ENCODE measurements at regions of chr5 and their contacts with region 1.

Region 1: GRCh38 chr5:157312492-157312891 is 46.6 kb downstream of the CYFIP2 start:
- DNase-seq: peak; percentile 62
- ATAC-seq: peak; percentile 91
- H3K4me3 ChIP-seq: no peak overlapping the region
- H3K27ac ChIP-seq: no peak overlapping the region
- H3K4me1 ChIP-seq: no peaks in the 10 kb centered on the region
- H3K27me3 ChIP-seq: no peaks in the 10 kb centered on the region
- CTCF ChIP-seq: peak; percentile 85
- EP300 ChIP-seq: no peak
- POLR2A ChIP-seq: no peak
- RAD21 ChIP-seq: peak; percentile 71

Region 2: DNA sequence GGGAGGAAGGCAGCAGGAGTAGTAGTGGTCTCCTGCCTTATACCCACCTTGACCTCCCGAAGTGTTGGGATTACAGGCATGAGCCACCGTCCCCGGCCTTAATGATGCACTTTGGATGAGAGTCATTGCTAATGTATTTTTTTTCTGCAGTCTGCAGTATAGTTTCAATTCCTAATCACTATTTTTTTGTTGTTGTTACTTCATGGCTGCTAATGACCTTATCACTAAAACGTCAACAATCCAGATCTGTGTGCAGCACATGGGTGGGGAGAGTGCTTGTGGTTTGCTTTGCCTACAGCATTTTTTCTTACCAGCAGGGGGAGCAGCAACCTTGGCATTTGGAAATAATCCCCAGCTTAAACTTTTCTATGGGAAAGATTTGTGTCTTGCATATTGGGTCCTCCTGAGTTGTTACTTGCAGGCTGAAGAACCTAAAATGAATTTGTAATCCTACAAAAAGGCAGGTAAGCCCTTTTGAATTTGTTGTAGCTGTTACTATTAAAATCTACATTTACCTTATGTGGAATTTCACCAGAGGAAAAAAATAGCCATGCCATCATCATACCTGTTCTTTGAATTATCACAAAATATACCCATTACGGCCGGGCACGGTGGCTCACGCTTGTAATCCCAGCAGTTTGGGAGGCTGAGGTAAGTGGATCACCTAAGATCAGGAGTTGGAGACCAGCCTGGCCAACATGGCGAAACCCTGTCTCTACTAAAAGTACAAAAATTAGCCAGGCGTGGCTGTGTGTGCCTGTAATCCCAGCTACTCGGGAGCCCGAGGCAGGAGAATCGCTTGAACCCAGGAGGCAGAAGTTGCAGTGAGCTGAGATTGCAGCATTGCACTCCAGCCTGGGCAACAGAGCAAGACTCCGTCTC is 163.5 kb before region 1 on chr5:
- CTCF ChIA-PET with region 1: interaction called, 5 read pairs
- POLR2A ChIA-PET with region 1: no interaction called
- in situ Hi-C with region 1: loop called (anchors 10 kb)
- intact Hi-C with region 1: loop called (anchors 2 kb)
- DNase-seq: peak; percentile 47
- ATAC-seq: peak; percentile 92
- H3K4me3 ChIP-seq: no peak overlapping the region
- H3K27ac ChIP-seq: no peak overlapping the region
- H3K4me1 ChIP-seq: no peaks in the 10 kb centered on the region
- H3K27me3 ChIP-seq: 0 out of 5 replicates have a peak, but pooled peaks cover 0 to 3% of the 10 kb centered on the region in 2 experiments
- CTCF ChIP-seq: peak; percentile 82
- EP300 ChIP-seq: no peak
- POLR2A ChIP-seq: no peak
- RAD21 ChIP-seq: peak; percentile 17; the same call in 1 of the 2 replicates

Region 3: GRCh38 chr5:157253547-157253946 is 58.9 kb before region 1 on chr5:
- CTCF ChIA-PET with region 1: interaction called, 47 read pairs
- POLR2A ChIA-PET with region 1: no interaction called
- in situ Hi-C with region 1: loop called (anchors 5 kb)
- intact Hi-C with region 1: loop called (anchors 1 kb)
- DNase-seq: peak; percentile 35
- ATAC-seq: peak; percentile 87
- H3K4me3 ChIP-seq: no peak overlapping the region
- H3K27ac ChIP-seq: no peak overlapping the region
- H3K4me1 ChIP-seq: no peaks in the 10 kb centered on the region
- H3K27me3 ChIP-seq: no peaks in the 10 kb centered on the region; a peak in 1 of 5 replicates
- CTCF ChIP-seq: peak; percentile 86
- EP300 ChIP-seq: no peak
- POLR2A ChIP-seq: no peak
- RAD21 ChIP-seq: peak; percentile 80

Region 4: DNA sequence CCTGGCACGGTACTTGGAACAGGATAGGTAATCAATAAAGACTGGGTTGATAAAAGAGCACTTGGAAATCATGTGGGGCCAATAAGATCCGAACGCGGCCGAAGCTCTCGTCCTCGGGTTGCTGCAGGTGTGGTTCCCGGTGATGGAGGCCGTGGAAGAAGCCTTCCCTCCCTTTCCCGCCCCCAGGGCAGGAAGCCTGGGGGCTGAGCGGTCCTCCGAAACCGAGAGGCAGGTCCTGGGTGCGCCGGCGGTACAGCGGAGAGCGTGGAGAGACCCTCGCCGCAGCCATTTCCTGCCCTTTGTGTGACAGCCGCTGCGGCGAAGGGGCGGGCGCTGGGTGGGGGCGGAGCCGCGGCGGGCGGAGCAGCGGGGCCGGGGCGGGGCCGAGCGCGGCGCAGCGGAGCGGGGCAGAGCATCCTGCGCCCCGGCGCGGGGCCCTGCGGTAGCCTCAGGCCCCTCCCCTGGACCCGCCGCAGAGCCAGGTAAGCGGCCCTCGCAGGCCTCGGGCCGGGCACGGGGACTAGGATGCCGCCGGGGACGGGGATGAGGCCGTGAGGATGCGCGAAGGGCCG is 46.7 kb before region 1 on chr5 and contains the start of gene CYFIP2:
- CTCF ChIA-PET with region 1: no interaction called
- POLR2A ChIA-PET with region 1: no interaction called
- in situ Hi-C with region 1: no loop called
- intact Hi-C with region 1: loop called (anchors 1 kb)
- DNase-seq: no peak
- ATAC-seq: peak; percentile 94
- H3K4me3 ChIP-seq: peak within 1 kb of the TSS; percentile 74 to 84 (median 83)
- H3K27ac ChIP-seq: no peak within 1 kb of the TSS
- H3K4me1 ChIP-seq: peaks cover 58% of the 10 kb centered on the region
- H3K27me3 ChIP-seq: peaks cover 0 to 1% of the 10 kb centered on the region in 2 experiments; a peak in 2 of 5 replicates
- CTCF ChIP-seq: 0 out of 2 replicates have a peak, but pooled peaks have one; percentile 36
- EP300 ChIP-seq: no peak
- POLR2A ChIP-seq: peak in 1 of 2 experiments; percentile 73; a peak in 2 of 4 replicates
- RAD21 ChIP-seq: no peak
- total RNA-seq, gene CYFIP2: 30.3 and 40.2 TPM in 2 replicates

Region 5: GRCh38 chr5:157290981-157291711 is 21.3 kb before region 1 on chr5:
- CTCF ChIA-PET with region 1: no interaction called
- POLR2A ChIA-PET with region 1: no interaction called
- in situ Hi-C with region 1: no loop called
- intact Hi-C with region 1: loop called (anchors 1 kb)
- DNase-seq: peak; percentile 99
- ATAC-seq: peak; percentile 96
- H3K4me3 ChIP-seq: no peak overlapping the region; a peak in 1 of 6 replicates
- H3K27ac ChIP-seq: peak overlapping the region; percentile 73
- H3K4me1 ChIP-seq: peaks cover 67% of the 10 kb centered on the region
- H3K27me3 ChIP-seq: no peaks in the 10 kb centered on the region
- CTCF ChIP-seq: no peak
- EP300 ChIP-seq: peak in 1 of 2 experiments; percentile 77; a peak in 2 of 4 replicates
- POLR2A ChIP-seq: no peak
- RAD21 ChIP-seq: no peak

Region 6: GRCh38 chr5:157342822-157343402 is 30.4 kb after region 1 on chr5:
- CTCF ChIA-PET with region 1: no interaction called
- POLR2A ChIA-PET with region 1: no interaction called
- in situ Hi-C with region 1: no loop called
- intact Hi-C with region 1: no loop called
- DNase-seq: peak; percentile 22
- ATAC-seq: peak; percentile 91
- H3K4me3 ChIP-seq: no peak overlapping the region
- H3K27ac ChIP-seq: no peak overlapping the region
- H3K4me1 ChIP-seq: no peaks in the 10 kb centered on the region
- H3K27me3 ChIP-seq: no peaks in the 10 kb centered on the region
- CTCF ChIP-seq: peak; percentile 73
- EP300 ChIP-seq: no peak
- POLR2A ChIP-seq: no peak
- RAD21 ChIP-seq: no peak